CD8-positive, alpha-beta T cell (primary cell): ENCODE measurements at regions of chr2 and their contacts with region 1.

Region 1: DNA sequence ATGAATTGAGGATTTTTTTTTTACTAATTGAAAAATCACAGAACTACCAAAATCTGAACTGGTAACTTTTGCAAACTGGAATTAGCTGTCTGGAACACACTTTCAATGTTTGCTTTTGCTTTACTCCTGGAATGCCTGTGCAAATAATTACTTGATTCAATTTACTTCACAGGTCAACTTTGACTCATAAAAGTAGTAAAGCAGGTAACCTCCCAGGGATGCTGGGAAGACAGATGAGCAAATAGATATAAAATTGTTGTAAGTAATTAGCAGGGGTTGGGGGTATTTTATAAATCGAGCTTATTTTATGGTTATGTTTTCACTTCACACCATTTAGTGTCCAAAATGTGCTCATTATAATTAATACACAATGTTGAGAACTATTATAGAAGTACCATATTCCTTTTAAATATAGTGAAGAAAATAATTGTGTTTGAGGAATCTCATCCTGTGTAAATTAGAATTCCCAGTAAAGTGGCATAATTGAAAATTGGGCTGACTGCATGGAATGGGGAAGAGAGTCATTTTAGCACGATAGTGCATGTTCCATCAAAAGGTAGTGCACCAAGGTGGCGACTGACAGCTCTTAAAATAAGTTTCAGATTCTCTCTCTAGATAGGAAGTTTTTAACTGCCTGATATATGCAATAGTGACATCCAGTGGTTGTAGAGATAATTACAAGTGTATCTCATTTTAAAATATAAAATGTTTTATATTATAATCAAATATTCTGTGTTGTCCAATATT is 398.1 kb upstream of the HNRNPA3 start:
- DNase-seq: peak in 2 of 9 experiments; percentile 51 to 65
- ATAC-seq: peak; percentile 79
- H3K4me3 ChIP-seq: no peak overlapping the region
- H3K4me3 Mint-ChIP-seq: peak overlapping the region; percentile 19
- H3K27ac ChIP-seq: no peak overlapping the region
- H3K27ac Mint-ChIP-seq: no peak overlapping the region
- H3K4me1 ChIP-seq: peaks cover 45% of the 10 kb centered on the region
- H3K4me1 Mint-ChIP-seq: peaks cover 42% of the 10 kb centered on the region
- H3K27me3 ChIP-seq: no peaks in the 10 kb centered on the region
- H3K27me3 Mint-ChIP-seq: no peaks in the 10 kb centered on the region
- CTCF ChIP-seq: peak; percentile 95

Region 2: GRCh38 chr2:176804392-176804791 is 10.1 kb before region 1 on chr2:
- CTCF ChIA-PET with region 1: interaction called, 22 read pairs
- POLR2A ChIA-PET with region 1: interaction called, 3 read pairs
- intact Hi-C with region 1: no loop called
- DNase-seq: no peak
- ATAC-seq: no peak
- H3K4me3 ChIP-seq: no peak overlapping the region
- H3K4me3 Mint-ChIP-seq: no peak overlapping the region
- H3K27ac ChIP-seq: no peak overlapping the region
- H3K27ac Mint-ChIP-seq: no peak overlapping the region
- H3K4me1 ChIP-seq: no peaks in the 10 kb centered on the region
- H3K4me1 Mint-ChIP-seq: no peaks in the 10 kb centered on the region
- H3K27me3 ChIP-seq: no peaks in the 10 kb centered on the region
- H3K27me3 Mint-ChIP-seq: no peaks in the 10 kb centered on the region
- CTCF ChIP-seq: no peak

Region 3: GRCh38 chr2:176830362-176830761 is 15.9 kb after region 1 on chr2:
- CTCF ChIA-PET with region 1: interaction called, 11 read pairs
- POLR2A ChIA-PET with region 1: interaction called, 3 read pairs
- intact Hi-C with region 1: no loop called
- DNase-seq: peak in 5 of 9 experiments; percentile 41 to 68 (median 56)
- ATAC-seq: peak; percentile 53
- H3K4me3 ChIP-seq: no peak overlapping the region
- H3K4me3 Mint-ChIP-seq: no peak overlapping the region
- H3K27ac ChIP-seq: no peak overlapping the region
- H3K27ac Mint-ChIP-seq: no peak overlapping the region
- H3K4me1 ChIP-seq: peaks cover 31% of the 10 kb centered on the region
- H3K4me1 Mint-ChIP-seq: peaks cover 43% of the 10 kb centered on the region
- H3K27me3 ChIP-seq: no peaks in the 10 kb centered on the region
- H3K27me3 Mint-ChIP-seq: no peaks in the 10 kb centered on the region
- CTCF ChIP-seq: no peak

Region 4: DNA sequence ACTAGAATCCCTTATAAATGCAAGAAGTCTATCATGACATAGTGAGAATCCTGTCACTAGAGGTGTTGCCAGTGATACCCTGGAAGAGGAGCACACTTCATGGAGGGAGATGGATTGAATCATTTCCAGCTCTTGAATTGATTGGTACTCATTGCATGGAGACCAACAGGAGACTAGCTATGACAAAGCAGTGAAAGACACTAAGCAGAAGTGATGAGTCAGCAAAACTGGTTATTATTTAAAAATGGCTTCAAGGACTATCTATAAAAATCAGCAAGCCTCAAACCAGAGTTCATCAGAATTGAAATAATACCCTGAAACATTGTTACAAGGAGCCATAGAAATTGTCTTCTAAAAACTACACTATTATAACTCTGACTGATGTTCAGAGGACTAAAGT is 1057.8 kb after region 1 on chr2:
- CTCF ChIA-PET with region 1: no interaction called
- POLR2A ChIA-PET with region 1: no interaction called
- intact Hi-C with region 1: no loop called
- DNase-seq: no peak
- ATAC-seq: no peak
- H3K4me3 ChIP-seq: no peak overlapping the region
- H3K4me3 Mint-ChIP-seq: no peak overlapping the region
- H3K27ac ChIP-seq: no peak overlapping the region
- H3K27ac Mint-ChIP-seq: no peak overlapping the region
- H3K4me1 ChIP-seq: no peaks in the 10 kb centered on the region
- H3K4me1 Mint-ChIP-seq: no peaks in the 10 kb centered on the region
- H3K27me3 ChIP-seq: no peaks in the 10 kb centered on the region
- H3K27me3 Mint-ChIP-seq: peaks cover under 1% of the 10 kb centered on the region
- CTCF ChIP-seq: no peak